OCI-LY7 (cell line): ENCODE measurements at regions of chr10 and their contacts with region 1.

Region 1: GRCh38 chr10:63133056-63133820 is at the start of gene NRBF2:
- DNase-seq: peak; percentile 99
- H3K4me3 ChIP-seq: peak within 1 kb of the TSS; percentile 88
- H3K27ac ChIP-seq: peak within 1 kb of the TSS; percentile 72
- H3K4me1 ChIP-seq: peaks cover 22% of the 10 kb centered on the region
- CTCF ChIP-seq: peak; percentile 64
- total RNA-seq, gene NRBF2: 14.1 and 14.2 TPM in 2 replicates

Region 2: GRCh38 chr10:62804356-62805230 is 328.6 kb before region 1 on chr10 and contains the start of gene ADO:
- CTCF ChIA-PET with region 1: no interaction called
- POLR2A ChIA-PET with region 1: interaction called, 4 read pairs
- intact Hi-C with region 1: loop called (anchors 5 kb)
- DNase-seq: peak; percentile 89
- H3K4me3 ChIP-seq: peak within 1 kb of the TSS; percentile 88
- H3K27ac ChIP-seq: peak within 1 kb of the TSS; percentile 66
- H3K4me1 ChIP-seq: peaks cover 39% of the 10 kb centered on the region
- CTCF ChIP-seq: no peak
- total RNA-seq, gene ADO: 33.1 and 43.1 TPM in 2 replicates

Region 3: DNA sequence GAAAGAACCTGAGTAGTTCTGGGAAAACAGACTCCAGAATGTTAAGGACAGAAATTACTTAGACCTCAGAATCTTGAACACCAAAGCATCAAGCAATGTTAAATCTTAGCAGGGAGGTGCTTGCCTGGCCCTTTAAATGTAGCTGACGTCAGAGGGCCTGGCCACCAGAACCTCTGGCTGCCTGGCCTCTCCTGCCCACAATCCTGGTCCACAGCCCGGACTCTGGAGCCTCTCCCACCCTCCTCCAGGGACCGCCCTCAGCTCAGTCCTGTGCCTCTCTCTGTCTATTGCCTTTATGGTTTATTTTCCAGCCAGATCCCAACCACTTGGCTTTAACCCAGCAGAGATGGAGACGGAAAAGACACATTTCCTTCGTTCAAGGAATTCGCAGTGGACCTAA is 274.9 kb before region 1 on chr10:
- CTCF ChIA-PET with region 1: no interaction called
- POLR2A ChIA-PET with region 1: no interaction called
- intact Hi-C with region 1: no loop called
- DNase-seq: no peak
- H3K4me3 ChIP-seq: no peak overlapping the region
- H3K27ac ChIP-seq: no peak overlapping the region
- H3K4me1 ChIP-seq: peaks cover 12% of the 10 kb centered on the region
- CTCF ChIP-seq: no peak

Region 4: DNA sequence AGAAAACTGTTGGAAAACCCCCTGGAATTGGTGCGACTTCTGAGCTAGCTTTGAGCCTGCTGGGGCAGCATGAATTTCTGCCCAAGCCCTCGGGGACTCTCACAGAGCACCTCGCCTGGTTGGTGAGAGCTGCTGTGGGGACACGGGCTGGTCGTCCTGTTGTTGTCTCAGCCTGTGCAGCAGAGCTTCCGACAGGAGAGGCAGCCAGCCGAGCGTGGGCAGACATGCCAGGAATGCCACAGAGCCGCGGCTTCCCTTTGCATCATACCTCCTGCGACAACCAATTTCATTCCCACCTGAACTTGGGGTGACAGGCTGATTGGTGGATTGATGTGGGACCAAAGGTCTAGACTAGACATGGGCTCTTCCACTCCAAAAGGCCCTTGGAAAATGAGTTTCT is 60.3 kb before region 1 on chr10:
- CTCF ChIA-PET with region 1: no interaction called
- POLR2A ChIA-PET with region 1: no interaction called
- intact Hi-C with region 1: no loop called
- DNase-seq: no peak
- H3K4me3 ChIP-seq: no peak overlapping the region
- H3K27ac ChIP-seq: no peak overlapping the region
- H3K4me1 ChIP-seq: no peaks in the 10 kb centered on the region
- CTCF ChIP-seq: no peak

Region 5: GRCh38 chr10:63145782-63146181 is 12.5 kb after region 1 on chr10:
- CTCF ChIA-PET with region 1: no interaction called
- POLR2A ChIA-PET with region 1: interaction called, 33 read pairs
- intact Hi-C with region 1: no loop called
- DNase-seq: no peak
- H3K4me3 ChIP-seq: no peak overlapping the region
- H3K27ac ChIP-seq: no peak overlapping the region
- H3K4me1 ChIP-seq: no peaks in the 10 kb centered on the region
- CTCF ChIP-seq: no peak